ENCODE measurements at regions of chr19 and their contacts with region 1.

Region 1: GRCh38 chr19:36214386-36215275 is at the starts of genes ZNF146 and ZNF565:
- DNase-seq: peak; percentile 87 to 97 (median 96)
- ATAC-seq: peak; percentile 94
- H3K4me3 ChIP-seq: peak within 1 kb of the TSS; percentile 97
- H3K4me3 Mint-ChIP-seq: no peak within 1 kb of the TSS
- H3K27ac ChIP-seq: peak within 1 kb of the TSS; percentile 94
- H3K27ac Mint-ChIP-seq: peak within 1 kb of the TSS in 2 of 9 donors; percentile 38 to 41
- H3K4me1 ChIP-seq: peaks cover 14 to 19% of the 10 kb centered on the region in 2 donors
- H3K4me1 Mint-ChIP-seq: peaks cover 13 to 28% (median 25%) of the 10 kb centered on the region in 7 donors
- H3K27me3 ChIP-seq: no peaks in the 10 kb centered on the region
- H3K27me3 Mint-ChIP-seq: no peaks in the 10 kb centered on the region
- total RNA-seq, gene ZNF146: 27.7 to 77.4 (median 57.7) TPM
- total RNA-seq, gene ZNF565: 2.7 to 11.6 (median 7.8) TPM

Region 2: DNA sequence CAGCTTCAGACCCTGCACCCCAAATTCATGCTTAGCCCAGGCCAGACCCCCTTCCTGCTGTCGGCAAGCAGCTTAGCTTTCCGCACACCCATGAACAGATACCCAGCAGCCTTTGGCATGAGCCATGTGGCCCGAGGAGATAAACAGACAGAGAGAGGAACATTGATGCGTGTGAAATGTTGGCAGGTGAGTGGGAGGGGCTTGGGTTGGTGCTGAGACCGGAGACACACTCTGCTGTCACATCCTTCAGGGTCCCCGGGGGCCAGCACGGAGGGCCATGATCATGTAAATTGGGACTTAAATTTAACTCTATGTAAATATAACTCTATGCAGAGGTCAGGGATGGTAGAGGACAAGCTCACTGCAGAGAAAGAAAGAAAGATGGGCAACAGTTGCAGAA is 884.2 kb before region 1 on chr19:
- CTCF ChIA-PET with region 1: no interaction called
- POLR2A ChIA-PET with region 1: no interaction called
- intact Hi-C with region 1: no loop called
- DNase-seq: no peak
- ATAC-seq: peak; percentile 50
- H3K4me3 ChIP-seq: no peak overlapping the region
- H3K4me3 Mint-ChIP-seq: no peak overlapping the region
- H3K27ac ChIP-seq: no peak overlapping the region
- H3K27ac Mint-ChIP-seq: peak overlapping the region in 2 of 9 donors; percentile 17 to 22
- H3K4me1 ChIP-seq: peaks cover 0 to 8% of the 10 kb centered on the region in 2 donors
- H3K4me1 Mint-ChIP-seq: peaks cover 9 to 29% (median 17%) of the 10 kb centered on the region in 7 donors
- H3K27me3 ChIP-seq: no peaks in the 10 kb centered on the region
- H3K27me3 Mint-ChIP-seq: peaks cover 0 to 14% (median 4%) of the 10 kb centered on the region in 5 donors

Region 3: DNA sequence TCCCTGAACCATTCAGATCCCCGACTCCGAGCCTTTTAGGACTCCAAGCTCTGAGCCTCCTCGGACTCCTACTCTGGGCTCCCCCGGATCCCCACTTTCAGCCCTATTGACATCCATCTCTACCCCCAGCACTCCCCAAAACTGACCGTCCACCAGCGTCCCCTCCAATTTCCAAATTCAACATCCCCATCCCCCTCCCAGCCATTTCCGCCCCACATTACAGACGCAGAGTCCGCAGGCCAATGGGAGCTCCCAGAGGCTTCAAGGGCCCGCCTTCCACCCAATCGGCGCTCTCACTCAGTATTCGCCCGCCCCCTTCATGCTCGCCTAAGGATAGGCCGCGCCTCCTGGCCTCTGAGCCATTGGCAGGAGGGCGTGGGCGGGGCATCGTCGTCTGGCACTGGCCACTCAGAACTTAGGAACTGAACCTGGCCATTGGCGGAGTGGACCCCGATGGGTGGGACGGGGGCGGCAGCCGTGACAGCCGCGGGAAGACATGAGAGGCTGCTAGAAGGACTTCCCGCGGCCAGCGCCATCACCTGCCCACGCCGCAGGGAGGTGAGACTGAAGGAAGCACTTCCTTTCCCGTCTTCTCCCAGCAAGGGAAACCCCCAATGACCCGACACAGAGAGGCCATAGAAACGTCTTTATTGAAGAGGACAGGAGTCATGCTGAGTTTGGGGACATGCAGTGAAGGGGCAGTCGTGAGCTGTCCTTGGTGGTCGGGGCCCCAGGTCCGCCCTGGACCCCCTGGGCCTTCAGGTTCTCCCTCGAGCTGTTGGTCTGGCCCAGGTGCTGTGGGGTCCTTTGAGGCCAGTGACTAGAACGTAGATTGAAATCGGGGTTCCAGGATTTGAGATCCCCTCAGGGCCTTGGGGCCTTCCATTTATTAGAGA is 200.4 kb before region 1 on chr19 and contains the start of gene ALKBH6:
- CTCF ChIA-PET with region 1: no interaction called
- POLR2A ChIA-PET with region 1: no interaction called
- intact Hi-C with region 1: loop called in 1 of 2 experiments (anchors 5 kb)
- DNase-seq: peak; percentile 94 to 98 (median 97)
- ATAC-seq: peak; percentile 100
- H3K4me3 ChIP-seq: peak within 1 kb of the TSS; percentile 93
- H3K4me3 Mint-ChIP-seq: peak within 1 kb of the TSS; percentile 92 to 99 (median 95)
- H3K27ac ChIP-seq: peak within 1 kb of the TSS; percentile 86
- H3K27ac Mint-ChIP-seq: peak within 1 kb of the TSS; percentile 88 to 99 (median 94)
- H3K4me1 ChIP-seq: peaks cover 12 to 18% of the 10 kb centered on the region in 2 donors
- H3K4me1 Mint-ChIP-seq: peaks cover 36 to 53% (median 46%) of the 10 kb centered on the region in 7 donors
- H3K27me3 ChIP-seq: no peaks in the 10 kb centered on the region
- H3K27me3 Mint-ChIP-seq: no peaks in the 10 kb centered on the region
- total RNA-seq, gene ALKBH6: 32.6 to 60.6 (median 49.3) TPM

Region 4: GRCh38 chr19:36169084-36169760 is 45.4 kb before region 1 on chr19:
- CTCF ChIA-PET with region 1: no interaction called
- POLR2A ChIA-PET with region 1: interaction called, 4 read pairs
- intact Hi-C with region 1: loop called in 1 of 2 experiments (anchors 2 kb)
- DNase-seq: no peak
- ATAC-seq: no peak
- H3K4me3 ChIP-seq: no peak overlapping the region
- H3K4me3 Mint-ChIP-seq: no peak overlapping the region
- H3K27ac ChIP-seq: no peak overlapping the region
- H3K27ac Mint-ChIP-seq: peak overlapping the region in 2 of 9 donors; percentile 6 to 18
- H3K4me1 ChIP-seq: no peaks in the 10 kb centered on the region
- H3K4me1 Mint-ChIP-seq: peaks cover 0 to 5% (median 0%) of the 10 kb centered on the region in 7 donors
- H3K27me3 ChIP-seq: no peaks in the 10 kb centered on the region
- H3K27me3 Mint-ChIP-seq: no peaks in the 10 kb centered on the region

Region 5: DNA sequence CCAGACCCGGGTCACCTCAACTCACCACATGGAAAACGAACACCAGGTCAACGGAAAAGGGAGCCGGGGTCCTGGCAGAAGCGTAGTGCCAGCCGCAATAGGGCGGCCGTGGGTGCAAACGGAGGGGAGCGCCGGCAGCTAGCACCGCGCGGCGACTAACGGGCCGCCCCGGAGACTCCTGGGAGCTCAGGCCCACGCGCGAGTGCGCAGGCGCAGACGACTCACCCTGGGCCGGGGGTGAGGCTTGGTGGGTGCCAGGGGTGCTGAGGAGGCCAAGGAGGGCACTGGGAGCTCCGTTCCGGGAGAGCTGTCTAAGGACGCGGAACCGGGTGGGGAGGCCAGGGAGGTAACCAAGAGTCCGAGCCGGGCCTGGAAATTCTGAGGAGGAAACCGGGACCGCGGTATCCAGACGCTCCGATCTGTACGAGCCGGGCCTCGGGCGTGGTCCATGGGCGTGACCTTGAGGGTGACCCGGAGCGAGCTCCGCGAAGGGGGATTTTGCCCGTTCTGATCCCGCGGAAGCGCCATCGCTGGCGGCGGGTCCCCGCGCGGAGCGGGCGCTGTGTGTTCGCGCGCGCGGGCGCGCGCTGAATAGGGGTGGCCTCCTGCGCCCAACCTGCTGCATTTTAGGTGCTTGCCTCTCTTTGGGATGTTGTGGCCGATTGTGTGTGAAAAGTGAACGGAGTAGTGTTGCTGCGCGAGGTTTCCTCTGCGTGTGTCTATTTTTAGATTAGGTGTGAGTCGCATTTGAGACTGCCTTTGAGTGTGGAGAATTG is 390.7 kb after region 1 on chr19 and contains the start of gene ZNF382:
- CTCF ChIA-PET with region 1: no interaction called
- POLR2A ChIA-PET with region 1: interaction called, 5 read pairs
- intact Hi-C with region 1: loop called in 1 of 2 experiments (anchors 1 kb)
- DNase-seq: peak; percentile 77 to 92 (median 86)
- ATAC-seq: peak; percentile 80
- H3K4me3 ChIP-seq: peak within 1 kb of the TSS; percentile 95
- H3K4me3 Mint-ChIP-seq: peak within 1 kb of the TSS; percentile 81 to 99 (median 93)
- H3K27ac ChIP-seq: peak within 1 kb of the TSS; percentile 84
- H3K27ac Mint-ChIP-seq: peak within 1 kb of the TSS; percentile 78 to 98 (median 93)
- H3K4me1 ChIP-seq: peaks cover 7 to 15% of the 10 kb centered on the region in 2 donors
- H3K4me1 Mint-ChIP-seq: peaks cover 20 to 32% (median 27%) of the 10 kb centered on the region in 7 donors
- H3K27me3 ChIP-seq: no peaks in the 10 kb centered on the region
- H3K27me3 Mint-ChIP-seq: no peaks in the 10 kb centered on the region
- total RNA-seq, gene ZNF382: 5.4 to 20.2 (median 12.2) TPM

Region 6: DNA sequence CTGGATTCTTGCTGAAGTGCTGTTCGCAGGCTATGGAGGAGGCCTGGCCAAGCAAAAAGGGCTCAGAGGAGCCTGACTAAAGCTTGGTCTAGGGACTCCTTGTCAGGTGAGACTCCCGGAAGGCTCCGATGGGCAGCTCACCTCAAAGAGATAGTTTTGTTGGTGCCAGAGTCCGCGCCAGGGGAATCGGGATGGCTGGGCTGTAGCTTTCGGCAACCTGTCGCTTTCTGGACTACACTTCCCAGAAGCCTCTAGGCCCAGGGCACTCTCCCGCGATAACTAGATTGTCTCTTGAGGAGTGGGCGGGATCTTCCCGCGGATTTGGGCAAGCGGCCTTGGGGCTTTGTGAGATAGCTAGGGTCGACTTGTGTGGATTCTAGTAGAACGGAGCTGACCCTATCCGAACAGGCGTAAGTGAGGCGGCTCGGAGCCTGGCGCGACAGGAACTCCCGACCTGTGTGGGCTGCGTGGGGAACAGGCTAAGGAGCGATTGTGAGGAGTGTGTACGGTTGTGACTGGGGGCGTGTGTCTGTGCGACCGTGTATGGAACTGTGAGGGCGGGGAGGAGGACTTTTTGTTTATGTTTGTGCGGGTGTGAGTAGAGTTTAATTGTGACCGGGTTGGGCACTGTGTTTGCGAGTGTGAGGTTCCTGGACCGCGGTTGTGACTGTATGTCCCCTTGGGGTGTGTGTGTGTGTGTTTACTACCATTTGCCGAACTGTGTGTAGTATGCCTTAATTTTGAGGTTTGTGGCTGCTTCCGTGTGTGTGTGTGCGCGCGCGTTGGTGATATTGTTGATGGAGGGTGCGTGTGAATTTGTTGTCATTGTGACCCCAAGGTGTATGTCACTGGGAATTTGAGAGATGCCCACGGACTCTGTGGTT is 636.2 kb after region 1 on chr19 and contains the start of gene ZNF345:
- CTCF ChIA-PET with region 1: no interaction called
- POLR2A ChIA-PET with region 1: interaction called, 4 read pairs
- intact Hi-C with region 1: loop called (anchors 1 kb)
- DNase-seq: peak; percentile 62 to 91 (median 88)
- ATAC-seq: peak; percentile 93
- H3K4me3 ChIP-seq: peak within 1 kb of the TSS; percentile 92
- H3K4me3 Mint-ChIP-seq: no peak within 1 kb of the TSS
- H3K27ac ChIP-seq: peak within 1 kb of the TSS; percentile 86
- H3K27ac Mint-ChIP-seq: no peak within 1 kb of the TSS
- H3K4me1 ChIP-seq: peaks cover 9 to 16% of the 10 kb centered on the region in 2 donors
- H3K4me1 Mint-ChIP-seq: peaks cover 0 to 22% (median 13%) of the 10 kb centered on the region in 7 donors
- H3K27me3 ChIP-seq: no peaks in the 10 kb centered on the region
- H3K27me3 Mint-ChIP-seq: no peaks in the 10 kb centered on the region
- total RNA-seq, gene ZNF345: 6.8 to 18.2 (median 7.8) TPM

Region 7: DNA sequence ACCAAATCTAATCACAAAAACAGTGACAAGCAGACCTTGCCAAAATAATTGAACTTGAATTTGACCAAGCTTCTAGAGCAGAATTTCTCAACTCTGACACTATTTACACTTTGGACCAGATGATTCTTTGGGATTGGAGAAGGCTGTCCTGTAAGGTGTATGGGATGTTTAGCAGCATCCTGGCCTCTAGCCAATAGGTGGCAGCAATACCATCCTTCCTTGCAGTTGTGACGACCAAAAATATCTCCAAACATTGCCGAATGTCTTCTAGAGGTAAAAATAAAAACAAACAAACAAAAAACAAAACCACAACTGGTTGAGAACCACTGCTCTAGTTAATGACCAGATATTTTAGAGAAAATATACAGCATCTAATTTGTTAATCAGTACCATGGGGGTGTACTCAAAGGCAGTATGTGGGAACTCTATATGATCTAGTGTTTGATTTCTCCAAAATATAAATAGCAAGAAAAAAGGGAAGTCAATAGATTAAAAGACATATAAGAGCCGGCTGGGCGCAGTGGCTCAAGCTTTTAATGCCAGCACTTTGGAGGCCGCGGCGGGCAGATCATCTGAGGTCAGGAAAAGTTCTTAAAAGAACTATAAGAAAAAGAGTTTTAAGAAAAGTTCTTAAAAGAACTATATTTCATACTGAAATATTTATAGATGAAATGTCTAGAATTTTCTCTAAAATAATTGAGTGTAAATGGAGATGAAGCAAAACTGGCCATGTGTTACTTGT is 1095.4 kb after region 1 on chr19:
- CTCF ChIA-PET with region 1: no interaction called
- POLR2A ChIA-PET with region 1: no interaction called
- intact Hi-C with region 1: loop called in 1 of 2 experiments (anchors 10 kb)
- DNase-seq: peak in 3 of 9 donors; percentile 18 to 38 (median 32)
- ATAC-seq: peak; percentile 36
- H3K4me3 ChIP-seq: no peak overlapping the region
- H3K4me3 Mint-ChIP-seq: no peak overlapping the region
- H3K27ac ChIP-seq: no peak overlapping the region
- H3K27ac Mint-ChIP-seq: peak overlapping the region in 1 of 9 donors; percentile 28
- H3K4me1 ChIP-seq: peaks cover 0 to 5% of the 10 kb centered on the region in 2 donors
- H3K4me1 Mint-ChIP-seq: peaks cover 0 to 21% (median 13%) of the 10 kb centered on the region in 7 donors
- H3K27me3 ChIP-seq: no peaks in the 10 kb centered on the region
- H3K27me3 Mint-ChIP-seq: peaks cover 0 to 27% (median 19%) of the 10 kb centered on the region in 5 donors